Activated CD4-positive, alpha-beta T cell treated with anti-CD3 and anti-CD28 coated beads for 36 hours (primary cell): ENCODE measurements at regions of chr16 and their contacts with region 1.

Region 1: DNA sequence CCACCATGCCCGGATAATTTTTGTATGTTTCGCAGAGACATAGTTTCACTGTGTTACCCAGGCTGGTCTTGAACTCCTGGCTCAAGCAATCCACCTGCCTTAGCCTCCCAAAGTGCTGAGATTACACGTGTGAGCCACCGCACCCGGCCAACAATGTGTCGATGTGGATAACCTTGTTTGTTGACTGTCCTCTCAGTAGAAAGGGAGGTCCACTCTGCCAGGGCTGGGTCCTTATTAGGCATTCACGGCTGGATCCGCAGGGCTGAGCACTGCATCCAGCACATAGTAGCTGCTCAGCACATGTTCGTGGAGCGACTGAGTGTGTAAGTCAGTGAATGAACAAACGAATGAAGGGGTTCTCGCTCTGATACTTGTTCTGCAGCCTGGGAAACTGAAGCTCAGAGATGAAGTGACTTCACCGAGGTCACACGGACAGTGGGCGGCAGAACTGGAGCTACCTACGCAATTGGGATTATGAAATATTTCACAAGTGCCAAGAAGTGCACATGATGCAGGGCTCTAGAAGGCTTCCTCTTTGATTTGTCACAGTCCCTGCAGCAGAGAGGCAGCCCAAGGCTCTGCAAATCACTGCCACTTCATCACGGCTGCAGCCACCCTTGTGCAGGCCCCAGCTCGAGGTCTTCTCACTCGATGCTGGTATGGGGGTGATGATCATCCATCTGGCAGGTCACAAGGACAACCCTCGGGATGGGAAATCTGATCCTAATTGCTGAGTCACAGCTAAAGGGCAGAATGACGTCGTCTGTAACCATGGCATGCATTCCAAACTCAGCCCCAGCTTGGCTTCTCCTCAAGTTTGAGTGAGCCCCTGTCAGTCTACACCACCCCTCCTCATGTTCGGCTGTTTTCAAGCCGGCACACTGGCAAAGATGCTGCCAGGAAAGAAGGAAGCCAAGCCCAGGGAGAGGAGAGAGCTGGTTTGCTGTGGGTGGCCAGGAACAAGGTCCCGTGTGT is 28.0 kb upstream of the SNN start:
- DNase-seq: no peak
- ATAC-seq: no peak
- H3K4me3 Mint-ChIP-seq: no peak overlapping the region
- H3K27ac Mint-ChIP-seq: no peak overlapping the region
- H3K4me1 Mint-ChIP-seq: peaks cover 8% of the 10 kb centered on the region
- H3K27me3 Mint-ChIP-seq: no peaks in the 10 kb centered on the region

Region 2: GRCh38 chr16:11530171-11530940 is 109.9 kb before region 1 on chr16:
- CTCF ChIA-PET with region 1: interaction called, 51 read pairs
- POLR2A ChIA-PET with region 1: interaction called, 3 read pairs
- intact Hi-C with region 1: loop called (anchors 1 kb)
- DNase-seq: no peak
- ATAC-seq: no peak
- H3K4me3 Mint-ChIP-seq: no peak overlapping the region
- H3K27ac Mint-ChIP-seq: no peak overlapping the region
- H3K4me1 Mint-ChIP-seq: peaks cover 3% of the 10 kb centered on the region
- H3K27me3 Mint-ChIP-seq: peaks cover 2% of the 10 kb centered on the region

Region 3: GRCh38 chr16:12295395-12295794 is 655.2 kb after region 1 on chr16:
- CTCF ChIA-PET with region 1: no interaction called
- POLR2A ChIA-PET with region 1: no interaction called
- intact Hi-C with region 1: no loop called
- DNase-seq: no peak
- ATAC-seq: no peak
- H3K4me3 Mint-ChIP-seq: no peak overlapping the region
- H3K27ac Mint-ChIP-seq: no peak overlapping the region
- H3K4me1 Mint-ChIP-seq: peaks cover 5% of the 10 kb centered on the region
- H3K27me3 Mint-ChIP-seq: no peaks in the 10 kb centered on the region